Right cardiac atrium (tissue), 5 donors: ENCODE measurements at regions of chr16 and their contacts with region 1.

Region 1: GRCh38 chr16:11446566-11447119 is 101.4 kb downstream of the RMI2 start:
- DNase-seq: peak in 1 of 3 donors; percentile 18
- ATAC-seq: peak in 1 of 2 donors; percentile 29
- H3K4me3 ChIP-seq: no peak overlapping the region
- H3K27ac ChIP-seq: no peak overlapping the region
- H3K4me1 ChIP-seq: no peaks in the 10 kb centered on the region
- H3K27me3 ChIP-seq: no peaks in the 10 kb centered on the region

Region 2: GRCh38 chr16:11218604-11218962 is 228.1 kb before region 1 on chr16:
- intact Hi-C with region 1: no loop called
- DNase-seq: no peak
- ATAC-seq: no peak
- H3K4me3 ChIP-seq: no peak overlapping the region
- H3K27ac ChIP-seq: no peak overlapping the region
- H3K4me1 ChIP-seq: no peaks in the 10 kb centered on the region
- H3K27me3 ChIP-seq: no peaks in the 10 kb centered on the region

Region 3: DNA sequence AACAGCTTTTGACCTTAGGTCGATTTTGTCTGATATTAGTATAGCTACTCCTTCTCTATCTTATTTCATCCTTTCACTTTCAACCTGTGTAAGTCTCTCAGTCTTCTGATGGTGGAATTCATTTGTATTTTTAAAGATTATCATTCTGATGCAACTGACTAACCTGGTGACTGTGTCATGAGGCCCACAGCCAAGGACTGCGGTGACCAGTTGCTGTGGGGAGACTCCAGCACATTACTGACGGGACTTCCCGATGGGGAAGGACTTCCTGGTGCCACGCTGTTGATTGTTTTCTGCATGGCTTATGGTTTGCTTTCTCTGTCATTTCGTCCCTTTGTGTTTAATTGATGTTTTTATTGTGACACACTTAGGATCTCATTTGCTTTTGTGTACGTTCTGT is 67.2 kb before region 1 on chr16:
- intact Hi-C with region 1: no loop called
- DNase-seq: no peak
- ATAC-seq: peak in 1 of 2 donors; percentile 42
- H3K4me3 ChIP-seq: no peak overlapping the region
- H3K27ac ChIP-seq: no peak overlapping the region
- H3K4me1 ChIP-seq: no peaks in the 10 kb centered on the region
- H3K27me3 ChIP-seq: no peaks in the 10 kb centered on the region

Region 4: GRCh38 chr16:11510178-11510973 is 63.7 kb after region 1 on chr16:
- intact Hi-C with region 1: loop called in 1 of 4 experiments (anchors 10 kb)
- DNase-seq: no peak
- ATAC-seq: no peak
- H3K4me3 ChIP-seq: no peak overlapping the region
- H3K27ac ChIP-seq: no peak overlapping the region
- H3K4me1 ChIP-seq: no peaks in the 10 kb centered on the region
- H3K27me3 ChIP-seq: no peaks in the 10 kb centered on the region

Region 5: DNA sequence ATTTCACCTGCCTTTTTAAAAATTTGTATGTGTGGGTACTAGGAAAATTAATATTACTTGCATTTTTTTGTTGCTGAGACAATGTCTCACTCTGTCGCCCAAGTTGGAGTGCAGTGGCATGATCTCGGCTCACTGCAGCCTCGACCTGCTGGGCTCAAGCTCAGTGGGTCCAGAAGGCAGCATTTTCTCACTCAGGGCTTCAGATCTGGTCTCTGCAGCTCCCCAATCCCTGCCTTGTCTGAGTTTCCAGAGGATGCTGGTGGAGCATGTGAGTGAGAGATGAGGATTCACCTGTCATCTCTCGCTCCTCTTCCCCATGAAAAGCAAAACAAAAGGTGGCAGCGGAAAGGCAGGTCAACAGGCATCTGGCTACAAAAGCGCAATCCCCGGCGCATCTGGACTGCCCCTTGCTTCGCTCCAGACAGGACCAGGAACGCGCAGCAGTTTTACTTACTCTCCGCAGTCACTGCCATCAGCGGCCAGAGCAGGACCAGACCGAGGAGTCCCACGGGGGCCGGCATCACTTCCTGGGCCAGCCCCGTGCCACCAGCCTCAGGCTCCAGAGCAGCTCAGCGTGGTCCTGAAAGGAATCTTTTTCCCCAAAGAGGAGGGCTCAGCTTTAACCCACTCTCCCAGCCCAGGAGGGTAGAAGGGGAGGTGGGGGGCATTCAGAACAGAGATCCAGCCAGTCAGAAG is 80.2 kb after region 1 on chr16:
- intact Hi-C with region 1: no loop called
- DNase-seq: no peak
- ATAC-seq: peak in 1 of 2 donors; percentile 41
- H3K4me3 ChIP-seq: no peak overlapping the region
- H3K27ac ChIP-seq: no peak overlapping the region
- H3K4me1 ChIP-seq: no peaks in the 10 kb centered on the region
- H3K27me3 ChIP-seq: no peaks in the 10 kb centered on the region